ENCODE measurements at regions of chr2 and their contacts with region 1.

Region 1: GRCh38 chr2:106085181-106085940 is 108.7 kb downstream of the UXS1 start:
- DNase-seq: no peak
- H3K4me3 ChIP-seq: no peak overlapping the region
- H3K27ac ChIP-seq: peak overlapping the region in 2 of 4 donors; percentile 2 to 6
- H3K4me1 ChIP-seq: peaks cover 0 to 9% (median 6%) of the 10 kb centered on the region in 4 donors
- H3K27me3 ChIP-seq: no peaks in the 10 kb centered on the region
- CTCF ChIP-seq: peak in 3 of 4 experiments; percentile 24 to 48 (median 48)
- EP300 ChIP-seq: no peak
- POLR2A ChIP-seq: no peak

Region 2: DNA sequence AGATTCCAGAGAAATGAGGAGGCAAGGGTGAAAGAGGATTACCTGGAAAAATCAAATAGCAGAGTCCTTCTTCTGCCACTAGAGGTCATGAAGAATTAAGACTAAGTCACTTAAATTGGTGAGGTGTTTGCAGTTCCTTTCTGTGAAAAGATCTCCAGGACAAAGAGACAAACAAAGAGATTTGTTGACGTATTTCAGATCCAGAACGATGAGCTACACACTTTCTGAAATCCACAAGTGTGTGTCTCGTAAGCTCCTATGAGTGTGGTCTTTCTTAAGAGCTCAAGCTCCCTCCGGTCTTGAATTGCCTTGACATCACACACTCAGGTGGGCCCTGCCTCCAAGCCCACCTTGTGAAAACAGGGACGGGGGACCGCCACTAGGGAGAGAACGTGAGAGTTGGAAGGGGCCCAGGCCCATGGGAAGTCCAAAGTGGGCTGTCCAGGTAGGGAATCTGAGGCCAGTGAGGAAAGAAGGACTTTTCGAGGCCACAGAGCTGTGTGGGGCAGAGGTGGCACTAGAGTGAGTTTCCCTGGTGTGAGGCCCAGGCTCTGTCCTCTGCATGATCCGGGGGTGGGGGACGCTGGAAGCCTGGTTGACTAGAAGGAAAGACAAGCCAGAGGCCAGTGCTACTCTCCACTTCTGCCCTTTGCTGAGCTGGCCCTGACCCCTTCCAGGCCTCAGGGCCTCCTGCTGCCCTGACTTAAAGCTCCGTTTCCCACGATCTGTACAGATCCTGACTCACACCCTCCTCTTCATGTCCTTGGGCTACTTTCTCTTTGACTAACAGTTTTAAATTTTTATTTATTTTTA is 508.7 kb before region 1 on chr2:
- intact Hi-C with region 1: loop called (anchors 5 kb)
- DNase-seq: no peak
- H3K4me3 ChIP-seq: no peak overlapping the region
- H3K27ac ChIP-seq: peak overlapping the region in 1 of 4 donors; percentile 7
- H3K4me1 ChIP-seq: peaks cover 0 to 16% (median 7%) of the 10 kb centered on the region in 4 donors
- H3K27me3 ChIP-seq: no peaks in the 10 kb centered on the region
- CTCF ChIP-seq: peak; percentile 26 to 61 (median 53)
- EP300 ChIP-seq: no peak
- POLR2A ChIP-seq: no peak

Region 3: DNA sequence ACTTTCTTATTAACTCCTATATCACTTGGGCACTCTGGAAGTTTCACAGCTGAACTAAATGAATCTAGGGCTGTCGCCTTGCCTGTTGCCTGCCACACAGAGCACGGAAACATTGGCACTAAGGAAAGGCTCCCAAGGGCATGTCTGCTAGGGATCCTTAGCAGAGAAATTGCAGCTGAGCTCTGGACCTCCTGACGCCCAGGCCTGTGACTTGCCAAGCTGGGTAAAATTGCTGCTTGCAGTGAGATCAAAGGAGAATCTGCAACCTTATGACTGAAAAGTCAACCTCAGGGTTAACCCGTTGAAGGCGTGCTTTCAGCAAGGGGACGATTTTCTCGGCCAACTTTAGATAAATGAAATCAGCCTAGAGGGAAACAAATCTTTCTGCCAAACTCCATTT is 150.9 kb before region 1 on chr2:
- intact Hi-C with region 1: loop called (anchors 10 kb)
- DNase-seq: no peak
- H3K4me3 ChIP-seq: no peak overlapping the region
- H3K27ac ChIP-seq: peak overlapping the region in 2 of 4 donors; percentile 12 to 18
- H3K4me1 ChIP-seq: peaks cover 0 to 16% (median 15%) of the 10 kb centered on the region in 4 donors
- H3K27me3 ChIP-seq: no peaks in the 10 kb centered on the region
- CTCF ChIP-seq: no peak
- EP300 ChIP-seq: no peak
- POLR2A ChIP-seq: no peak

Region 4: DNA sequence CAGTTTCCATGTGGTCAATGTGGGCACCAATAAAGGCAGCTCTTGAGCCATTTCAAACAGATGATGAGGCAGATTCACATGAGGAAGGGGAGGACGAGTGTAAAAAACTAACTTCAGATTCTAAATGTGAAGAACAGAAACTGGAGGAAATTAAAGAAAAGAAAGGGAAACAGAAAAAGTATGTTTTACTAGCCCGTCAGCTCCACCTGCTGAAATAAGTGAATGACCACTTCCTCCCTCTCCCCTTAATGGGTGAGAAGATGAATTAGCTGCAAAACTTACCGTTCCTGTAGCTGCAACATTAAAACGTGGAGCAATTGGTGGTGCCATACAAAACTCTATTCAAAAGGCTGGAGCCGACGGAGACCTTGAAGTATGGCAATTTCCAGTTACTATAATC is 94.7 kb before region 1 on chr2:
- intact Hi-C with region 1: no loop called
- DNase-seq: no peak
- H3K4me3 ChIP-seq: no peak overlapping the region
- H3K27ac ChIP-seq: no peak overlapping the region
- H3K4me1 ChIP-seq: no peaks in the 10 kb centered on the region
- H3K27me3 ChIP-seq: no peaks in the 10 kb centered on the region
- CTCF ChIP-seq: no peak
- EP300 ChIP-seq: no peak
- POLR2A ChIP-seq: no peak

Measured in sigmoid colon (tissue), 7 donors.